Heart left ventricle (tissue), 16 donors: ENCODE measurements at regions of chr1 and their contacts with region 1.

Region 1: DNA sequence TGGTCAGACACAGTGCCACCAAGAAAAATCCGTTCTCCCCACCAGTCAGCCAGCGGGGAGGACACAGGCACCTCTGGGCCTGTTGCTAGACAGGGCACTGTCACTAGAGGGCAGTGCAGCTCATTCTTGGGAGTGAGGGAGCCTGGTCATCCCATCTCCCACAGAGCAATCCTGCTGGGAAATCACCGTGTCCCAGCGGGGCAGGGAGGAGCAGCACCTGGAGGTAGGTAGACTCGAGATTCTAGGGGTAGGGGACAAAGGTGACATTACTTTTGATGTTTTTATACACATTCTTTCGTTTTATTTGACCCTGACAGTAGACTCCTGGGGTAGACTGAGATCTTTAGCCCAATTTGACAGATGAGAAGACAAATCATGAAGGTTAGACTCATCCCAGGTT is 6.7 kb upstream of the CAMK1G start:
- DNase-seq: peak; percentile 76 to 83 (median 80)
- ATAC-seq: peak; percentile 68 to 97 (median 94)
- H3K4me3 ChIP-seq: no peak overlapping the region
- H3K27ac ChIP-seq: no peak overlapping the region
- H3K4me1 ChIP-seq: peaks cover 0 to 7% (median 0%) of the 10 kb centered on the region in 12 donors
- H3K27me3 ChIP-seq: peaks cover 0 to 19% (median 5%) of the 10 kb centered on the region in 9 donors
- CTCF ChIP-seq: peak; percentile 92 to 98 (median 94)
- POLR2A ChIP-seq: no peak

Region 2: DNA sequence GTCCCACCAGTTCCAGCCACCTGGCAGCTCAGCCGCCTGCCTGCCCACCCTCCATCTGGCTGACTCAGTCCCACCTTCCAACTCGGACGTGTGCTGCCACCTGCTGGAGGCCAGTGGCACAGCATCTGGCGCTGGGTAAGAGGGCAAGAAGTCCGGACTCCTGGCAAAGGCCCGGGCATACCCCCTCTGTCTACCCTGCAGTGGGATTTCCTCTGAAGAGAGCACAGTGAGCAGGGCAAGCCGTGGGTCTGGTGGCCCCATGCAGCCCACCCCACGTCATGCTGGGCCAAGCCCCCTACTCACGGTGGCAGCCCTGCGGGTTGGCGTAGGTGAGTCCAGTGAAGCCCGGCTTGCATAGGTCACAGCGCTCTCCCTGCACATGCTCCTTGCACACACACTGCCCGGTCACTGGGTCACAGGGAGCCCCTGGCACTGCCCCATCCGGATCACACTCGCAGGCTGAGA is 51.0 kb after region 1 on chr1:
- intact Hi-C with region 1: loop called in 9 of 10 experiments (anchors 2 to 5 kb)
- DNase-seq: peak; percentile 78 to 88 (median 81)
- ATAC-seq: peak; percentile 29 to 77 (median 72)
- H3K4me3 ChIP-seq: peak overlapping the region in 2 of 12 donors; percentile 7 to 38
- H3K27ac ChIP-seq: peak overlapping the region in 4 of 12 donors; percentile 4 to 55 (median 38)
- H3K4me1 ChIP-seq: peaks cover 0 to 55% (median 37%) of the 10 kb centered on the region in 12 donors
- H3K27me3 ChIP-seq: no peaks in the 10 kb centered on the region
- CTCF ChIP-seq: peak; percentile 95 to 99 (median 97)
- POLR2A ChIP-seq: no peak

Region 3: DNA sequence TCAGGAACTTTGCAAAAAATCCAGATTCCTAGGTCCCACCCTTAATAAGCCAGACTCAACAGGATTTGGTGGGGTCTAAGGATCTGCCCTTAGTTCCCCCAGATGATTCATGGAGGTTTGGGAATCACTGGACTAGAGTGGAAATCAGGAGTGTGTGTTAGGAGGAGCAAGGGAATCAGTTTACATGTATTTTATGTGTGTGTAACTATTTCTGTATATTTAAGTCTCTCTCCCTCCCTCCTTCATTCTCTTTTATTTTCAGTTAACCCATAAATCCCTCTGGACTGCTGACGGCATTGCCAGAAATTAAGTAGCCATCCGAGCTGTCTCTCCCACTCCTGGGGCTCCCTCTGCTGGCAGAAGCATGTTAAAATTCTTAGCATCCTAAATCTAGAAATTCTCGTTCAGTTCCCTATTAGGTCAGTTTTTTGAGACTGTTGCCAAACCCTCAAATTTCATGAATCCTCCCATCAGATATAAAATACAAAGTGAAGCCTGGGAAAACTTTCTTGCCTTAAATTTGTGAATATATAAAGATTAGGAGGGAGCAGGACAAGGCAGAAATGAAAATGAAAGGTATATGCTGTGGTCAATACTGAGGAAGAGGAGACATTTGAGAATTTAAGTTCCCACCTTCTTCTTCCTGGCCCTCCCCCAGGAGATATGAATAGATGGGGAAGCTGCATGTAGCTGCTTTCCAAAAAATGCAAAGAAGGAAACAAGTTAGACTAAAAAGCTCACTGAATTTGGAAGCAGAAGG is 116.1 kb after region 1 on chr1:
- intact Hi-C with region 1: loop called (anchors 1 to 5 kb)
- DNase-seq: peak; percentile 68 to 85 (median 80)
- ATAC-seq: peak in 3 of 4 donors; percentile 56 to 78 (median 61)
- H3K4me3 ChIP-seq: no peak overlapping the region
- H3K27ac ChIP-seq: peak overlapping the region in 5 of 12 donors; percentile 17 to 56 (median 49)
- H3K4me1 ChIP-seq: peaks cover 0 to 46% (median 14%) of the 10 kb centered on the region in 12 donors
- H3K27me3 ChIP-seq: no peaks in the 10 kb centered on the region
- CTCF ChIP-seq: peak; percentile 78 to 94 (median 85)
- POLR2A ChIP-seq: no peak

Region 4: DNA sequence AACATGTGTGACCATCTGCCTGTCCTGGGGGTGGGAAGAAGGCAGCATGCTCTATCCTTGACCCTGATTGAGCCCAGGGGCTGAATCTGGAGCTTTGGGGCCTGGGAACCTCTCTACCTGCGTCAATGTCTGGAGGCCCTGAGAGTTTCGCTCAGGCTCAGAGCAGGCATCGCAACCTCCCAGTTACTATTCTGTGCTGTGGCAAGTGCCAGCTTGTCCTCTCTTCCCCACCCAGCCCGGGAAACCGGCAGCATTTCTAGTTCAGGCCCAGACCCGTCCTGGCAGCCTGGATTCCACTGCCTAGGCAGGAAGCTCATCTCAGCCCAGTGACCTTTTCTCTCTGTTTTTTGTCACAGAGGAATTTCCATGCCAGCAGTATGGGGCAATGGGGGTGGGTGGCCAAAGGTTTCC is 239.1 kb after region 1 on chr1:
- intact Hi-C with region 1: loop called in 2 of 10 experiments (anchors 10 kb)
- DNase-seq: no peak
- ATAC-seq: no peak
- H3K4me3 ChIP-seq: no peak overlapping the region
- H3K27ac ChIP-seq: no peak overlapping the region
- H3K4me1 ChIP-seq: no peaks in the 10 kb centered on the region
- H3K27me3 ChIP-seq: peaks cover 0 to 5% (median 0%) of the 10 kb centered on the region in 9 donors
- CTCF ChIP-seq: no peak
- POLR2A ChIP-seq: no peak

Region 5: DNA sequence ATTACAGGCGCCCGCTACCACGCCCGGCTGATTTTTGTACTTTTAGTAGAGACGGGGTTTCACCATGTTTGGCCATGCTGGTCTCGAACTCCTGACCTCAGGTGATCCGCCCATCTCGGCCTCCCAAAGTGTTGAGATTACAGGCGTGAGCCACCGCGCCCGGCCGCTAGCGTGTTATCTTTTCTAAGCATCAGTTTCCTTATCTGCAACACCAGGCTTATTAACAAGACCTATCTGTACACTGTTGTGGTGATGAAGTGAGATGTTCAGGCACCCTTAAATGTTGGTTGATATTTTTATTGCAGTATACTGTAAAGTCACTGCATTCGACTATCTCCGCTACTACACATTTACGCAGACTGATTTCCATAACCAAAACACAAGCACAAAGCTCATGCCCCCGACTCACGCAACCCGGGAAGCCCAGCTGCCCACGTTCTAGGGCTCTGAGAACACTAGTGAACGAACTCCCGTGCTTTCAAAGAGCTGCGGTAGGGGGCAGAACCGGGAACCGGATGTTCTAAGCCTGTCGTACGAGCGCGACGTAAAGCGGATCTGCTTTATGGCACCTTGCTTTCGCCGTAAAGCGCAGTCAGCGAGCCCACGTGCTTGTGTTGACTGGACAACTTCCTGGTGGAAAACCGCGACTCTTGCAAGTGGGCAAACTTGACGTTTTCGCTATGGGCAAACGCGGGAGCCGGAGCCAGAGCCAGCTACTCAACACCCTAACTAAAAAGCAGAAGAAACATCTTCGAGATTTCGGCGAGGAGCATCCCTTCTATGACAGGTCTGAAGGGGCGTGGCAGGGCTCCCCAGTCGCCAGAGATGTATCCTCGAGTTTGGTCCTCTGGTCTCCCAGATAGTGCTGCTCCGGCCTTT is 250.8 kb after region 1 on chr1 and contains the start of gene UTP25:
- intact Hi-C with region 1: loop called in 1 of 10 experiments (anchors 10 kb)
- DNase-seq: peak; percentile 91 to 95 (median 93)
- ATAC-seq: peak; percentile 81 to 93 (median 89)
- H3K4me3 ChIP-seq: peak within 1 kb of the TSS; percentile 64 to 91 (median 80)
- H3K27ac ChIP-seq: peak within 1 kb of the TSS; percentile 0 to 86 (median 66)
- H3K4me1 ChIP-seq: peaks cover 0 to 27% (median 8%) of the 10 kb centered on the region in 12 donors
- H3K27me3 ChIP-seq: no peaks in the 10 kb centered on the region
- CTCF ChIP-seq: peak; percentile 55 to 90 (median 71)
- POLR2A ChIP-seq: peak in 1 of 2 donors; percentile 62
- total RNA-seq, gene UTP25: 1.6 to 5.5 (median 3.6) TPM

Region 6: GRCh38 chr1:209989525-209989924 is 412.7 kb after region 1 on chr1:
- intact Hi-C with region 1: loop called in 3 of 10 experiments (anchors 10 kb)
- DNase-seq: no peak
- ATAC-seq: no peak
- H3K4me3 ChIP-seq: no peak overlapping the region
- H3K27ac ChIP-seq: no peak overlapping the region
- H3K4me1 ChIP-seq: no peaks in the 10 kb centered on the region
- H3K27me3 ChIP-seq: peaks cover 0 to 17% (median 0%) of the 10 kb centered on the region in 9 donors
- CTCF ChIP-seq: peak in 11 of 12 donors; percentile 9 to 49 (median 34)
- POLR2A ChIP-seq: no peak